ENCODE measurements at regions of chr3 and their contacts with region 1.

Region 1: DNA sequence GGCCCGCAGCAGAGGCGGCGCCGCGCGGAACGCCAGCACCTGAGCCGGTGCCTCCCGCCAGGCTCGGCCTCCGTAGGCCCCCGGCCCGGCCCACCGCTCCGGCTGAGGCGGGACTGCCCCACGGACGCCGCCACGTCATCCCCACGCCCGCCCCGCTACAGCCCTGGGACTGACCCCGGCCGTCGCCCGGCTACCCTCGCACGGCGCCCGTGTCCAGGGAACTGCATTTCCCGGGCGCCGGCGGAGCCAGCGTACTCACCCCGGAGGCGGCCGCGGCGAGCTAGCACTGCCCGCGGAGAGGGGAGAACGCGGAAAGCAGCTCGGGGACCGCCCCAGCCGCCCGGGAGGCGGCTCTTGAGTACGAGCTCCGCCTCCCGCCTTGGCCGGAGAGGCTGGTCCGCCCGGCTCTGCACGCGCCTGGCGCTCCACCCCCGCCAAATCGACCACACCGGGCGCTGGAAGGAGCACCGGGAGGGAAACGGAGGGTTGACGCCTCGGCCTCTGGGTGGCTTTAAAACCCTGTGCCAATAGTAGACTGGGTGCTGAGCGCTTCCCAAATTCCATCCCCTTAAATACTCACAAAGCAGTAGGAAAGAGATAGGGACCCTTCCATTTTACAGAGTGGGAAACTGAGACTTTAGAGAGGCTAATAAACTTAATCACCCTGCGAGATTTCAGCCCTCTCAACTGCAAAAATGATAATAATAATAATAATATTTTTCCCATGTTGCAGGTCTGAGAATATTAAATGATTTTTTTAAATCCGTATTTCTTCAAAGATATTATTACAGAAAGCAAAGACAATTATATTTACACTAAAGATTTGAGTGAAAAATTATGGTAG is at the start of gene B4GALT4:
- DNase-seq: peak; percentile 34 to 75 (median 60)
- ATAC-seq: peak; percentile 72 to 81
- H3K4me3 Mint-ChIP-seq: peak within 1 kb of the TSS; percentile 77 to 96 (median 88)
- H3K27ac Mint-ChIP-seq: peak within 1 kb of the TSS; percentile 83 to 97 (median 92)
- H3K4me1 Mint-ChIP-seq: peaks cover 15 to 49% (median 33%) of the 10 kb centered on the region in 4 donors
- H3K27me3 Mint-ChIP-seq: no peaks in the 10 kb centered on the region
- polyA plus RNA-seq, gene B4GALT4: 2.9 to 6.8 (median 5.9) TPM

Region 2: DNA sequence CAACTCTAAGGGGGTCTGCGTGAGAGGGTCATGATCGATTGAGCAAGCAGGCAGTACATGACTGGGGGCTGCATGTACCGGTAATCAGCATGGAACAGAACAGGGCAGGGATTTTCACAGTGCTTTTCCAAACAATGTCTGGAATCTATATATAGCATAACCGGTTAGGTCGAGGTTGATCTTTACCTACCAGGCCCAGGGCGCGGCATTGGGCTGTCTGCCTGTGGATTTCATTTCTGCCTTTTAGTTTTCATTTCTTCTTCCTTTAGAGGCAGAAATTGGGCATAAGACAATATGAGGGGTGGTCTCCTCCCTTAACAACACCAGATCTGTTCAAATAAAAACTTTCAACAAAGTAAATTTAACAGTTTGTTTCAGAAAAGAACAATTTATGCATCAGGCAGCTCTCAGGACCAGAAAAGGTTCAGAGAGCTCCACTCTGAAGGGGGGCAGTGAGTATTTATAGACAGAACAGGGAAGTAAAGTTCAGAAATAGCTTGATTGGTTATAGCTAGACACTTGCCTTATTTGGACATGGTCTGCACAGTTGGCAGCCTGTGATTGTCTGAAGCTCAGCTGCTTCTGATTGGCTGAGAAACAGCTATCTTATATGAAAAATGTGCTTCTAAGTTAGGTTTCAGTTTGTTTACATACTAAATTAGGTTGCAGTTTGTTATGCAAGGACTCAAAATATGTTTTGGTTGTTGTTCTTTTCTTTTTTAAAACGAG is 17.0 kb after region 1 on chr3:
- POLR2A ChIA-PET with region 1: no interaction called
- DNase-seq: no peak
- ATAC-seq: no peak
- H3K4me3 Mint-ChIP-seq: no peak overlapping the region
- H3K27ac Mint-ChIP-seq: peak overlapping the region in 1 of 10 donors; percentile 35
- H3K4me1 Mint-ChIP-seq: peaks cover 0 to 10% (median 0%) of the 10 kb centered on the region in 4 donors
- H3K27me3 Mint-ChIP-seq: peaks cover 0 to 4% (median 0%) of the 10 kb centered on the region in 5 donors

Region 3: GRCh38 chr3:119279101-119279554 is 38.3 kb after region 1 on chr3:
- POLR2A ChIA-PET with region 1: no interaction called
- DNase-seq: no peak
- ATAC-seq: no peak
- H3K4me3 Mint-ChIP-seq: no peak overlapping the region
- H3K27ac Mint-ChIP-seq: peak overlapping the region in 2 of 10 donors; percentile 41 to 66
- H3K4me1 Mint-ChIP-seq: peaks cover 0 to 2% (median 0%) of the 10 kb centered on the region in 4 donors
- H3K27me3 Mint-ChIP-seq: no peaks in the 10 kb centered on the region

Region 4: DNA sequence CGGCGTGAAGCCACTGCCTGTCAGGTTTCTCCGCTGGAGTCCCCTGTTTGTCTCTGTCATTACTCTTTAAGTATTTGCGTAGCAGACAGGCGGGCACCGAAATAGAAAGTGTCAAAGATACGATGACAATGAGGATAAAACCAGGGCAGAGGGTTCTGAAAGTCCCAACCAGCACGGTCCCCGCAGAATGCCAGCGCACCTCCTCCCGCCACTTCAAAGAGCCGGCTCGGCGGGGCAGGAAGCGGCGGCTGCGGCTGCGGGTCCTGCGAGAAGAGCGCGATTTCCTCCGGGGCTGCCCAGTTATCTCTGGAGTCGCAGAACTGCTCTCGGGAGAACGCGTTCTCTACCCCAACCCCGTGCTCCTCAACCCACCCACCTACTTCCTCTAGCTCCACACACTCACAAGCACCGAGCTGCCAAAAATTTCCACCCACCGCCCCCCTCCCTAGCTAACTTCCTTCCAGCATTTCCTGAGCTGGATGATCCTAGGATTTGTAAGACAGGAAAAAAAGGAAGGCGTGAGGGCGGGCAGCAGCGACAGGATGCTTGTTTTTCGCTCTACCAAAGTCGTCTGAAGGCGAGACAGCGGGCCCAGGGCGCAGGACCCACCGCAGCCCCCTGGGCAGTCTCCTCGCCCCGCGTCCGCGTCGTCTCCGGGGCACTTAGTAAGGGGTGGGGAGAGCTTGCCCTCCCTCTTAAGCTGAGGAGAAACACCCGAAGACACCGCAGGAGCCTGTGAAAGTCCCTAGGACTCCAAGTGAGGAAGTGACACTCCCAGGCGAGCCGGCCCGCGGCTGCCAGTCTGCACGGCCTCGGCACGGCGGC is 53.3 kb after region 1 on chr3 and contains the start of gene ARHGAP31:
- POLR2A ChIA-PET with region 1: interaction called, 24 read pairs
- DNase-seq: peak; percentile 64 to 94 (median 88)
- ATAC-seq: peak; percentile 70 to 74
- H3K4me3 Mint-ChIP-seq: peak within 1 kb of the TSS; percentile 86 to 97 (median 92)
- H3K27ac Mint-ChIP-seq: peak within 1 kb of the TSS; percentile 86 to 98 (median 98)
- H3K4me1 Mint-ChIP-seq: peaks cover 23 to 65% (median 54%) of the 10 kb centered on the region in 4 donors
- H3K27me3 Mint-ChIP-seq: no peaks in the 10 kb centered on the region
- polyA plus RNA-seq, gene ARHGAP31: 0.32 to 2.3 (median 1.6) TPM

Measured in naive thymus-derived CD8-positive, alpha-beta T cell (primary cell).